Vagina (tissue), 2 donors: ENCODE measurements at regions of chr13 and their contacts with region 1.

Region 1: GRCh38 chr13:84896128-84896527 is 903.1 kb downstream of the SLITRK6 start:
- DNase-seq: no peak
- H3K4me3 ChIP-seq: no peak overlapping the region
- H3K27ac ChIP-seq: no peak overlapping the region
- H3K4me1 ChIP-seq: no peaks in the 10 kb centered on the region
- H3K27me3 ChIP-seq: no peaks in the 10 kb centered on the region
- CTCF ChIP-seq: peak in 2 of 3 experiments; percentile 21 to 34
- POLR2A ChIP-seq: no peak

Region 2: DNA sequence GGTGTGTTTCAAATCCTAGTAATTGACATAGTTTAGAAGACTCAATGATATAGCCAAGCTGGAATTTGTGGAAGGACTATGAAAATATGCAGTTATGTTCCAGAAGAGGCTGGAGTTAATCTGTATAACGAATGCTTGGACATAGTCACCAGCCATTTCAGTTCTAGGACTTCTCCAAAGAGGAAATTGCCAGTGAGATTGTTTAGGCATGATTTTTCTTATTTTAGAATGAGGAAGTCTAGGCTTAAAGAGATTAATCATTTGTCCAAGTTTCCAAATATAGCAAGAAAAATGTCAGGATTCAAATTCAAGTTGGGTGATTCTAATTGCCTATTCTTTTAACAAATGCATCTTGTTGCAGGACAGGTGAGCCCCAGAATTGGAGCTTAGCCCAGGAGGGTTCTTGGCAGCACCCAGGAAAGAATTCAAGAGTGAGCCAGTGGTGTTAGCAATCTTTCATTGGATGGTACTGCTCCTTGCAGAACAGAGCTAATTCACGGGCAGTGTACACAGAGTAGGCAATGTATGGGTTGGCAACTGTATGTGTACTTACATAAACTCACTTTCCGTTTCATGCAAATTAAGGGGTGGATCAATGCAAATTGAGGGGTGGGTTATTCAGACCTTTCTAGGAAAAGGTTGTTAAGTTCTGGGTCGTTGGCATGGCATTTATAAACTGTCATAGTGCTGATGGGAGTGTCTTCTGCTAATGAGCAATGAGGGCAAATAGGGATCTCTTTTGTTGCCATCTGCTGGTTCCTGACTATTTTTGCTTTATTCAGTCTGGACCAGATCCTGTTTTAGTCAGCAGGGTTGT is 250.7 kb before region 1 on chr13:
- intact Hi-C with region 1: no loop called
- DNase-seq: no peak
- H3K4me3 ChIP-seq: no peak overlapping the region
- H3K27ac ChIP-seq: no peak overlapping the region
- H3K4me1 ChIP-seq: no peaks in the 10 kb centered on the region
- H3K27me3 ChIP-seq: no peaks in the 10 kb centered on the region
- CTCF ChIP-seq: no peak
- POLR2A ChIP-seq: no peak

Region 3: DNA sequence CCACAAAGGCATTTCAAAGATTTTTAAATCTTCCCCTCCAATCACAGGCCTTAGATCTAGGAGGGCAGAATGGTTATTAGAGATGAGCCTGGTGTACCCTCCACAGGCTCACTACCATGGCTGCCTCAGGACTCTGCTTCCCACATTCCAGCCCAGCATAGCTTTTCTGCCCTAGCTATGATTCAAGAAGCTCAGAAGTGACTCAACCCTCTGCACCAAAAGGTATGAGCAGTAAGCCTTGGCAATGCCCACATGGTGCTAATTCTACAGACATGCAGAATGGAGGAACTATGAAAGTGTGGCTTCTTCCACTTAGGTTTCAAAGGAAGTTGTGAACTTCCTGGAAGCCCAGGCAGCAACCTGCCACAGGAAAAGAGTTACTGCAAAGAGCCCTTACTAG is 116.9 kb after region 1 on chr13:
- intact Hi-C with region 1: no loop called
- DNase-seq: no peak
- H3K4me3 ChIP-seq: no peak overlapping the region
- H3K27ac ChIP-seq: no peak overlapping the region
- H3K4me1 ChIP-seq: no peaks in the 10 kb centered on the region
- H3K27me3 ChIP-seq: no peaks in the 10 kb centered on the region
- CTCF ChIP-seq: no peak
- POLR2A ChIP-seq: no peak

Region 4: GRCh38 chr13:85828149-85828548 is 932.0 kb after region 1 on chr13:
- intact Hi-C with region 1: loop called (anchors 10 kb)
- DNase-seq: no peak
- H3K4me3 ChIP-seq: no peak overlapping the region
- H3K27ac ChIP-seq: no peak overlapping the region
- H3K4me1 ChIP-seq: no peaks in the 10 kb centered on the region
- H3K27me3 ChIP-seq: no peaks in the 10 kb centered on the region
- CTCF ChIP-seq: peak in 1 of 3 experiments; percentile 20
- POLR2A ChIP-seq: no peak